ENCODE measurements at regions of chr4 and their contacts with region 1.

Region 1: GRCh38 chr4:77082886-77083608 is 7.3 kb upstream of the CCNI start:
- DNase-seq: no peak
- H3K4me3 ChIP-seq: no peak overlapping the region
- H3K27ac ChIP-seq: no peak overlapping the region
- H3K4me1 ChIP-seq: peaks cover 0 to 4% of the 10 kb centered on the region in 2 donors
- H3K27me3 ChIP-seq: no peaks in the 10 kb centered on the region
- CTCF ChIP-seq: no peak
- POLR2A ChIP-seq: no peak

Region 2: GRCh38 chr4:76993787-76994641 is 89.0 kb before region 1 on chr4:
- intact Hi-C with region 1: no loop called
- DNase-seq: no peak
- H3K4me3 ChIP-seq: no peak overlapping the region
- H3K27ac ChIP-seq: no peak overlapping the region
- H3K4me1 ChIP-seq: no peaks in the 10 kb centered on the region
- H3K27me3 ChIP-seq: no peaks in the 10 kb centered on the region
- CTCF ChIP-seq: no peak
- POLR2A ChIP-seq: no peak

Region 3: DNA sequence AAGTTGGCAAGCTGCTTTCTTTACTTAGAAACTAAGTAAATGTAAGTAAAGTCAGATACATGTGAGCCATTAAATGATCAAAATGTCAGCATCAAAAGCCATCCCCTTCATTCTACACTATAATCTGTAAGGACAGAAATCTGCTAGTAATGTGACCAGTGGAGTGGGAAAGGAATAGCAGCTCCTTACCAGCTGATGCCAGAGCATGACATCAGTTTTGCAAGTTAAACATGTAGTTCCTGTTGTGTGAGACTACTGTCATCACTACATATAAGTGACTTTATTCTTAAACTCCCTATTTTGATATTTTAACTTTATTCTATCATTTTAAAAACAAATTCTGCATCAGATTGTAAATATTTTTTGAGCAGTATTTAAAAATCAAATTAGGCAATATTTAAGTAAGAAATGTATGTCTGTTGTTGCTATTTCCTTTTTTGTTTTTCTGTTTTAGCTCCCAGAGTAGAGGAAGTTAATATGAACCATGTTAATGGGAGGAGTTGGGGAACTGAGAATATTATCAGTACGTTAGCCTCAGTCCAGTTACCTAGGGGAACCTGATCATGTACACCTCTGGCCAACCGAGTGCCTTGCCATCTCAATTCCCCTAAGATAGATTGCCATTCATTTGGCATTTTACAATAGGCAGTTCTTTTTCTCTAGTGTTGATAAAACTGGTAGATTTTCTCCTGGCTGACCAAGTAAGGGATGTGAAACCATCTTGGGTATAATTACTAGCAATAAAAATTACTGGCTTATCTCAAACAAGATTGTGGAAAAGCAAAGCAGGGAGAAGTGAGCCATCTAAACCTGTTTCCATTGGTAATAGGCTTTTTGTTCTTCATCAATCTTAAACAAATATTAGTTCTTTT is 42.0 kb before region 1 on chr4:
- intact Hi-C with region 1: no loop called
- DNase-seq: no peak
- H3K4me3 ChIP-seq: no peak overlapping the region
- H3K27ac ChIP-seq: no peak overlapping the region
- H3K4me1 ChIP-seq: peaks cover 0 to 9% of the 10 kb centered on the region in 2 donors
- H3K27me3 ChIP-seq: no peaks in the 10 kb centered on the region
- CTCF ChIP-seq: no peak
- POLR2A ChIP-seq: no peak

Region 4: DNA sequence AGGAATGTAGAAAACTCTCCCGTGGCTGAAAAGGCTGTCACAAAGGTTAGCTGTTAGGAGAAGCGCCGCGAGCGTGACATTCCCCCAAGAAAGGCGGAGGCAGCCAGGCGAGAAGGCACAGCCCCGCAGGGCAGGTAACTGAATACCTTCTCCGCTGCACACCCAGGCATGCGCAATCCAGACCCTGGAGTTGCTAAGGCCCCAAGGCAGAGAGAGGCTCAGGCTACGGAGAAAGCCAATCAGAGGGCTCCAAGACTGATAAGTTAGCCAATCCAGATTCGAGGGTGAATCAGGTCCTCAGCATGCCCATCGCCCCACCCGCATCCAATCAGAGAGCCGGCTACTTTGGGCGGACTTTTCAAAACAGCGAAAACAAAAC is 73.5 kb after region 1 on chr4:
- intact Hi-C with region 1: loop called in 1 of 2 experiments (anchors 10 kb)
- DNase-seq: peak; percentile 97 to 99 (median 98)
- H3K4me3 ChIP-seq: peak overlapping the region; percentile 12 to 83 (median 67)
- H3K27ac ChIP-seq: peak overlapping the region; percentile 67 to 95 (median 86)
- H3K4me1 ChIP-seq: peaks cover 7 to 28% of the 10 kb centered on the region in 2 donors
- H3K27me3 ChIP-seq: no peaks in the 10 kb centered on the region
- CTCF ChIP-seq: no peak
- POLR2A ChIP-seq: peak in 1 of 2 donors; percentile 79

Region 5: GRCh38 chr4:77332696-77333270 is 249.7 kb after region 1 on chr4:
- intact Hi-C with region 1: no loop called
- DNase-seq: no peak
- H3K4me3 ChIP-seq: no peak overlapping the region
- H3K27ac ChIP-seq: no peak overlapping the region
- H3K4me1 ChIP-seq: no peaks in the 10 kb centered on the region
- H3K27me3 ChIP-seq: no peaks in the 10 kb centered on the region
- CTCF ChIP-seq: no peak
- POLR2A ChIP-seq: no peak

Region 6: GRCh38 chr4:78592104-78592783 is 1509.2 kb after region 1 on chr4:
- intact Hi-C with region 1: no loop called
- DNase-seq: no peak
- H3K4me3 ChIP-seq: no peak overlapping the region
- H3K27ac ChIP-seq: no peak overlapping the region
- H3K4me1 ChIP-seq: peaks cover 0 to 9% of the 10 kb centered on the region in 2 donors
- H3K27me3 ChIP-seq: no peaks in the 10 kb centered on the region
- CTCF ChIP-seq: peak in 3 of 6 experiments; percentile 14 to 29 (median 20)
- POLR2A ChIP-seq: no peak